Activated CD4-positive, alpha-beta T cell treated with anti-CD3 and anti-CD28 coated beads for 36 hours (primary cell): ENCODE measurements at regions of chr22 and their contacts with region 1.

Region 1: GRCh38 chr22:37244114-37244921 is at the start of gene RAC2:
- DNase-seq: peak; percentile 97
- ATAC-seq: peak; percentile 60
- H3K4me3 Mint-ChIP-seq: peak within 1 kb of the TSS; percentile 92
- H3K27ac Mint-ChIP-seq: peak within 1 kb of the TSS; percentile 94
- H3K4me1 Mint-ChIP-seq: peaks cover 47% of the 10 kb centered on the region
- H3K27me3 Mint-ChIP-seq: no peaks in the 10 kb centered on the region
- total RNA-seq, gene RAC2: 692 to 930 TPM

Region 2: DNA sequence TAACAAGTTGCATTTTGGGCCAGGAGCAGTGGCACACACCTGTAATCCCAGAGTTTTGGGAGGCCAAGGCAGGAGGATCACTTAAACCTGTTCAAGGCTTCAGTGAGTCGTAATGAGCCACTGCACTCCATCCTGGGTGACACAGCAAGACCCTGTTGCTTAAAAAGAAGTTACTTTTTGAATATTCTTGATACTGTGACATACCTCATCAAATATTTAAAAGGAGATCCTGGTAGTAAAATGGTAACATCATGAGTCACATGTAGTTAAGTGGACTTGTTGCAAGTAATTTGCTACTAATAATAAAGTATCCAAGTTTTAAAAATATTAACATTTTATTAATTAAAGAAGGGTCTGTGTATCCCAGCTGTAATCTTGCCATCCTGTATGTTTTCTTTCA is 1968.7 kb before region 1 on chr22:
- CTCF ChIA-PET with region 1: no interaction called
- POLR2A ChIA-PET with region 1: interaction called, 12 read pairs
- intact Hi-C with region 1: no loop called
- DNase-seq: no peak
- ATAC-seq: peak; percentile 38
- H3K4me3 Mint-ChIP-seq: no peak overlapping the region
- H3K27ac Mint-ChIP-seq: no peak overlapping the region
- H3K4me1 Mint-ChIP-seq: peaks cover 28% of the 10 kb centered on the region
- H3K27me3 Mint-ChIP-seq: no peaks in the 10 kb centered on the region

Region 3: GRCh38 chr22:37077884-37078485 is 166.3 kb before region 1 on chr22:
- CTCF ChIA-PET with region 1: interaction called, 3 read pairs
- POLR2A ChIA-PET with region 1: no interaction called
- intact Hi-C with region 1: loop called in 1 of 2 experiments (anchors 1 kb)
- DNase-seq: peak; percentile 94
- ATAC-seq: peak; percentile 18
- H3K4me3 Mint-ChIP-seq: no peak overlapping the region
- H3K27ac Mint-ChIP-seq: peak overlapping the region; percentile 94
- H3K4me1 Mint-ChIP-seq: peaks cover 59% of the 10 kb centered on the region
- H3K27me3 Mint-ChIP-seq: peaks cover 10% of the 10 kb centered on the region

Region 4: GRCh38 chr22:37166675-37167066 is 77.6 kb before region 1 on chr22:
- CTCF ChIA-PET with region 1: interaction called, 4 read pairs
- POLR2A ChIA-PET with region 1: interaction called, 3 read pairs
- intact Hi-C with region 1: loop called in 1 of 2 experiments (anchors 5 kb)
- DNase-seq: peak; percentile 92
- ATAC-seq: peak; percentile 20
- H3K4me3 Mint-ChIP-seq: peak overlapping the region; percentile 53
- H3K27ac Mint-ChIP-seq: peak overlapping the region; percentile 82
- H3K4me1 Mint-ChIP-seq: peaks cover 71% of the 10 kb centered on the region
- H3K27me3 Mint-ChIP-seq: no peaks in the 10 kb centered on the region

Region 5: GRCh38 chr22:37254209-37254866 is 10.0 kb after region 1 on chr22:
- CTCF ChIA-PET with region 1: interaction called, 187 read pairs
- POLR2A ChIA-PET with region 1: interaction called, 3 read pairs
- intact Hi-C with region 1: loop called in 1 of 2 experiments (anchors 1 kb)
- DNase-seq: no peak
- ATAC-seq: no peak
- H3K4me3 Mint-ChIP-seq: no peak overlapping the region
- H3K27ac Mint-ChIP-seq: no peak overlapping the region
- H3K4me1 Mint-ChIP-seq: peaks cover 29% of the 10 kb centered on the region
- H3K27me3 Mint-ChIP-seq: no peaks in the 10 kb centered on the region

Region 6: GRCh38 chr22:37295213-37295886 is 51.0 kb after region 1 on chr22:
- CTCF ChIA-PET with region 1: no interaction called
- POLR2A ChIA-PET with region 1: no interaction called
- intact Hi-C with region 1: no loop called
- DNase-seq: peak; percentile 54
- ATAC-seq: peak; percentile 68
- H3K4me3 Mint-ChIP-seq: no peak overlapping the region
- H3K27ac Mint-ChIP-seq: peak overlapping the region; percentile 79
- H3K4me1 Mint-ChIP-seq: peaks cover 47% of the 10 kb centered on the region
- H3K27me3 Mint-ChIP-seq: no peaks in the 10 kb centered on the region

Region 7: DNA sequence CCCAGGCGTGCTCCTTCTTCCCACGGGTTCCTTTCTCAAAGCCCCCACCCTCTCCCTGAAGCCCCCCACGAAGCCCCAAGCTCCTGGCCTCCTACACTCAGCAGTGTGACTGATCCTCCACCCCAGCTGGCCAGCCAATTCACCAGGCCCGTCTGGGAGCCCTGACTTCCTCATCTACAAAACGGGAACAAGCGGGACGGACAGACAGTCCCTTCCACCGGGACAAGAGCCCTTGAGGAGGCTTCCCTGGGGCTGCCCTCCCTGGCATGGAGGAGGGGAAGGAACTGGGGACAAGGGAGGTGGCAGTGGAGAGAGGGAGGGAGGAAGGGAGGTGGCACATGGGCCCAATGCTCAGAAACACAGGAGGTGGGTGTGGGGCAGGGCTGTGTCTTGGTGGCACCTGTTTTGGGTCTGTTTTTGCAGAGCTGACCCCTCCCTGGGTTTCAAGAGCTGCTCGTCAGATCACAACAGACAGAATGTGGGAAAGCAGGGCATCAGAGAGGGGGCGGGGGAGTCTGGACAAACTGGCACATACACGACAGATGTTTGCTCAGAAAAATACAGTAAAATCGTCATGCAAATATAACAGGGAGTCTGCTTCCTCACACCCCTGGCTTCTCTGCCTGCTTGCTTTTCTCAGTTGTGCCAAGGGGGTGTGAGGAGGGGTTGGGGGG is 126.1 kb after region 1 on chr22:
- CTCF ChIA-PET with region 1: no interaction called
- POLR2A ChIA-PET with region 1: no interaction called
- intact Hi-C with region 1: no loop called
- DNase-seq: no peak
- ATAC-seq: no peak
- H3K4me3 Mint-ChIP-seq: no peak overlapping the region
- H3K27ac Mint-ChIP-seq: no peak overlapping the region
- H3K4me1 Mint-ChIP-seq: no peaks in the 10 kb centered on the region
- H3K27me3 Mint-ChIP-seq: peaks cover 5% of the 10 kb centered on the region

Region 8: GRCh38 chr22:37807410-37808293 is 563.3 kb after region 1 on chr22 and contains the start of gene GCAT:
- CTCF ChIA-PET with region 1: no interaction called
- POLR2A ChIA-PET with region 1: no interaction called
- intact Hi-C with region 1: loop called in 1 of 2 experiments (anchors 10 kb)
- DNase-seq: peak; percentile 97
- ATAC-seq: peak; percentile 97
- H3K4me3 Mint-ChIP-seq: peak within 1 kb of the TSS; percentile 78
- H3K27ac Mint-ChIP-seq: peak within 1 kb of the TSS; percentile 31
- H3K4me1 Mint-ChIP-seq: peaks cover 41% of the 10 kb centered on the region
- H3K27me3 Mint-ChIP-seq: peaks cover 37% of the 10 kb centered on the region
- total RNA-seq, gene GCAT: 21.3 to 22.4 TPM